Gastrocnemius medialis (tissue), 4 donors: ENCODE measurements at regions of chr6 and their contacts with region 1.

Region 1: DNA sequence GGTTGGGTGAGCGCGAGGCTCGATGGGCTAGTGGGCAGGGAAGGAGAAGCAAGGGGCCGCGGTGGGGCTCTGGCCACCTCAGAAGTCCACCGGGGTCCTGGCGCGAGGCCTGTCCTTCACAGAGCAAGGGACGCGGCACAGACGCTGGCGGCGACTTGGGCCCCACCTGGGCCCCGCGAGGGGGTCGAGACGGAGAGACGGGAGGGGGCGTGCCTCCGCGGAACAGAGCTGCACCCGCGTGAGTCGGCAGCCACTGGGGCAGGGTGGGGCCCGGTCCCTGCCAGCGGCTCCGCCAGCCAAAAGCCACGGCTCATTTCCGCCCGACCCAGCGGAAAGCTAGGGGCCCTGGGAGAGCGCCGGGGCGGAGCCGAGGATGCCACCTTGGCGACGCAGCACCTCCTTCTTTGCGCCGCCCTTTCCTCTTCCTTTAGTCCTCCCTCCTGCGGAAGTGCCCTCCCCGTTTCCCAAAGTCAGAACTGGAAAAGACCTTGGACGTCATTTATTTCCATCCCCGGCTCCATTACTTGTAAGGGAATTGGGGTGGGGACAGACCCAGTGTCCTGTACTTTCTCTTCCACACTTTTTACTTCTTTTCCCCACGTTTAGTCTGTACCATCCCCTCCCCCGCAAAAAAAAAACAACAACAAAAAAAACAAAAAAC is at the start of gene CUL7:
- DNase-seq: peak; percentile 88 to 91
- ATAC-seq: peak; percentile 91 to 97
- H3K4me3 ChIP-seq: peak within 1 kb of the TSS; percentile 39 to 86 (median 74)
- H3K27ac ChIP-seq: peak within 1 kb of the TSS; percentile 86 to 98 (median 92)
- H3K4me1 ChIP-seq: peaks cover 15 to 27% of the 10 kb centered on the region in 2 donors
- H3K27me3 ChIP-seq: no peaks in the 10 kb centered on the region
- CTCF ChIP-seq: no peak
- POLR2A ChIP-seq: peak; percentile 60 to 73
- total RNA-seq, gene CUL7: 11.9 to 21.3 (median 15.4) TPM

Region 2: GRCh38 chr6:42197555-42198362 is 855.9 kb before region 1 on chr6:
- in situ Hi-C with region 1: no loop called
- intact Hi-C with region 1: no loop called
- DNase-seq: no peak
- ATAC-seq: no peak
- H3K4me3 ChIP-seq: no peak overlapping the region
- H3K27ac ChIP-seq: no peak overlapping the region
- H3K4me1 ChIP-seq: no peaks in the 10 kb centered on the region
- H3K27me3 ChIP-seq: no peaks in the 10 kb centered on the region
- CTCF ChIP-seq: no peak
- POLR2A ChIP-seq: no peak

Region 3: DNA sequence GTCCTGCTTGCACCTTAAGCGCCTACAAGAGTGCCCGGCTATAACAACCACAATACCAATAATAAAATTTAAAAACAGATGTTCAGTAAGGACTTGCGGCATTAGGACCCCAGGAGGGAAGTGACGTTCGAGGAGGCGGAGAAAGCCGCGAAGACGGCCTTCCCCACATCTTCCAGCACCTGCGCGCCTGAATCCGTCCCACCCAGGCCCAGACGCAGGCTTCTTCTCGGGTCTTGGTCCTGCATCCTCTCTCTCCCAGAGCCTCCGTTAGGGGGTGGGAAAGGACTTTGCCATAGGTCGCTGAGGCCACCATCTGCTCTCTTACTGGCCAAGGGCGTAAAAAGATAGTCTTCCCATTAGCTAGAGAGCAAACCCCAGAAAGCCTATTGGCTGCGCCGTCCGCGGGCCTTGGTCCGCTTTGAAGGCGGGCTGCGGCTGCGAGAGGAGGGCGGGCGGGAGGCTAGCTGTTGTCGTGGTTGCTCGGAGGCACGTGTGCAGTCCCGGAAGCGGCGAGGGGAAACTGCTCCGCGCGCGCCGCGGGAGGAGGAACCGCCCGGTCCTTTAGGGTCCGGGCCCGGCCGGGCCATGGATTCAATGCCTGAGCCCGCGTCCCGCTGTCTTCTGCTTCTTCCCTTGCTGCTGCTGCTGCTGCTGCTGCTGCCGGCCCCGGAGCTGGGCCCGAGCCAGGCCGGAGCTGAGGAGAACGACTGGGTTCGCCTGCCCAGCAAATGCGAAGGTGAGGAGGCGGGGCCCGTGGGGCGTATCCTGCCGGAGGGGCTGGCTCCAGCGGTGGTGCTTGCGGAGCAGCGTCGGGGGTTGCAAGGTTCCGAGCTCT is 124.5 kb before region 1 on chr6 and contains the start of gene CNPY3:
- in situ Hi-C with region 1: no loop called
- intact Hi-C with region 1: loop called (anchors 1 kb)
- DNase-seq: peak; percentile 90 to 92
- ATAC-seq: peak; percentile 96
- H3K4me3 ChIP-seq: peak within 1 kb of the TSS; percentile 74 to 93 (median 82)
- H3K27ac ChIP-seq: peak within 1 kb of the TSS; percentile 79 to 94 (median 88)
- H3K4me1 ChIP-seq: peaks cover 17 to 19% of the 10 kb centered on the region in 2 donors
- H3K27me3 ChIP-seq: no peaks in the 10 kb centered on the region
- CTCF ChIP-seq: peak in 2 of 5 experiments; percentile 17 to 24
- POLR2A ChIP-seq: peak; percentile 41 to 47
- total RNA-seq, gene CNPY3: 7.1 to 13.5 (median 9.3) TPM

Region 4: GRCh38 chr6:42984001-42984923 is 69.4 kb before region 1 on chr6 and contains the start of gene PPP2R5D:
- in situ Hi-C with region 1: no loop called
- intact Hi-C with region 1: loop called (anchors 2 kb)
- DNase-seq: peak; percentile 98 to 99
- ATAC-seq: peak; percentile 98 to 100
- H3K4me3 ChIP-seq: peak within 1 kb of the TSS; percentile 83 to 89 (median 86)
- H3K27ac ChIP-seq: peak within 1 kb of the TSS; percentile 85 to 95 (median 90)
- H3K4me1 ChIP-seq: peaks cover 39 to 49% of the 10 kb centered on the region in 2 donors
- H3K27me3 ChIP-seq: no peaks in the 10 kb centered on the region
- CTCF ChIP-seq: peak in 1 of 5 experiments; percentile 8
- POLR2A ChIP-seq: peak; percentile 72 to 80
- total RNA-seq, gene PPP2R5D: 44.3 to 68.2 (median 52.6) TPM

Region 5: GRCh38 chr6:43035495-43036194 is 18.0 kb before region 1 on chr6:
- in situ Hi-C with region 1: no loop called
- intact Hi-C with region 1: loop called (anchors 1 kb)
- DNase-seq: peak; percentile 87 to 97
- ATAC-seq: peak; percentile 94 to 98
- H3K4me3 ChIP-seq: no peak overlapping the region
- H3K27ac ChIP-seq: peak overlapping the region; percentile 82 to 94 (median 92)
- H3K4me1 ChIP-seq: peaks cover 26 to 33% of the 10 kb centered on the region in 2 donors
- H3K27me3 ChIP-seq: no peaks in the 10 kb centered on the region
- CTCF ChIP-seq: peak in 2 of 5 experiments; percentile 12 to 20
- POLR2A ChIP-seq: no peak

Region 6: GRCh38 chr6:43143235-43144124 is 89.8 kb after region 1 on chr6:
- in situ Hi-C with region 1: no loop called
- intact Hi-C with region 1: no loop called
- DNase-seq: peak; percentile 46 to 80
- ATAC-seq: peak; percentile 81 to 86
- H3K4me3 ChIP-seq: peak overlapping the region in 1 of 4 donors; percentile 5
- H3K27ac ChIP-seq: peak overlapping the region in 2 of 4 donors; percentile 31 to 50
- H3K4me1 ChIP-seq: peaks cover 21 to 24% of the 10 kb centered on the region in 2 donors
- H3K27me3 ChIP-seq: no peaks in the 10 kb centered on the region
- CTCF ChIP-seq: peak; percentile 87 to 96 (median 94)
- POLR2A ChIP-seq: no peak

Region 7: DNA sequence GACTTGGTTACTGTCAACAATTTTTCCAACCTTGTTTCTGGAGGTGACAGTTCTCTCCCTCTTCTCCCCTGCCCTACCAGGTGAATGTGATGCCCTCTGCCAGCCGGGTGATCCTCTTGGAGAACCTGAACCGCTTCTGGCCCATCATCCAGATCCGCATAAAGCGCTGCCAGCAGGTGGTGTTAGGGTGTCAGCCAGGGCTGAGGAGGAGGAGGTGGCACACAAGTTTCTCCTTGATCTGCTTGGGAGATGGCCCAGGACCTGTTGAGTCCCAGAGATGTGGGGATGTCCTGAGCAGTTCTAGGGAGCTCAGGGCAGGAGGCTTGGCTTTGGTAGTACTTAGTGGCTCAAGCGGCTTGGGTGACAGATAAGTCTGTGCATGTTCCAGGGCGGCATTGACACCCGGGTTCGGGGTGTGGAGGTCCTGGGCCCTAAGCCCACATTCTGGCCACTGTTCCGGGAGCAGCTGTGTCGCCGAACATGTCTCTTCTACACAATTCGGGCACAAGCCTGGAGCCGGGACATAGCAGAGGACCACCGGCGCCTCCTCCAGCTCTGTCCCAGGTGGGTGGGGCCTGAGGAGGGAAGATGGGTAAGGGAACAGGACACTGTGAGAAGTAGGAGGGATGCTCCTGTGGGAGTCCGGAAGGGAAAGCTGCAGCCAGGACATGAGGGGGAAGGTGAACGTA is 149.5 kb after region 1 on chr6:
- in situ Hi-C with region 1: no loop called
- intact Hi-C with region 1: no loop called
- DNase-seq: no peak
- ATAC-seq: no peak
- H3K4me3 ChIP-seq: no peak overlapping the region
- H3K27ac ChIP-seq: no peak overlapping the region
- H3K4me1 ChIP-seq: no peaks in the 10 kb centered on the region
- H3K27me3 ChIP-seq: no peaks in the 10 kb centered on the region
- CTCF ChIP-seq: no peak
- POLR2A ChIP-seq: no peak